Heart right ventricle (tissue), 16 donors: ENCODE measurements at regions of chr2 and their contacts with region 1.

Region 1: GRCh38 chr2:29130295-29130694 is 15.1 kb downstream of the CLIP4 start:
- DNase-seq: no peak
- ATAC-seq: peak in 6 of 8 donors; percentile 42 to 77 (median 58)
- H3K4me3 ChIP-seq: no peak overlapping the region
- H3K27ac ChIP-seq: peak overlapping the region in 5 of 10 donors; percentile 2 to 66 (median 25)
- H3K4me1 ChIP-seq: peaks cover 0 to 28% (median 15%) of the 10 kb centered on the region in 9 donors
- H3K27me3 ChIP-seq: no peaks in the 10 kb centered on the region
- CTCF ChIP-seq: no peak

Region 2: DNA sequence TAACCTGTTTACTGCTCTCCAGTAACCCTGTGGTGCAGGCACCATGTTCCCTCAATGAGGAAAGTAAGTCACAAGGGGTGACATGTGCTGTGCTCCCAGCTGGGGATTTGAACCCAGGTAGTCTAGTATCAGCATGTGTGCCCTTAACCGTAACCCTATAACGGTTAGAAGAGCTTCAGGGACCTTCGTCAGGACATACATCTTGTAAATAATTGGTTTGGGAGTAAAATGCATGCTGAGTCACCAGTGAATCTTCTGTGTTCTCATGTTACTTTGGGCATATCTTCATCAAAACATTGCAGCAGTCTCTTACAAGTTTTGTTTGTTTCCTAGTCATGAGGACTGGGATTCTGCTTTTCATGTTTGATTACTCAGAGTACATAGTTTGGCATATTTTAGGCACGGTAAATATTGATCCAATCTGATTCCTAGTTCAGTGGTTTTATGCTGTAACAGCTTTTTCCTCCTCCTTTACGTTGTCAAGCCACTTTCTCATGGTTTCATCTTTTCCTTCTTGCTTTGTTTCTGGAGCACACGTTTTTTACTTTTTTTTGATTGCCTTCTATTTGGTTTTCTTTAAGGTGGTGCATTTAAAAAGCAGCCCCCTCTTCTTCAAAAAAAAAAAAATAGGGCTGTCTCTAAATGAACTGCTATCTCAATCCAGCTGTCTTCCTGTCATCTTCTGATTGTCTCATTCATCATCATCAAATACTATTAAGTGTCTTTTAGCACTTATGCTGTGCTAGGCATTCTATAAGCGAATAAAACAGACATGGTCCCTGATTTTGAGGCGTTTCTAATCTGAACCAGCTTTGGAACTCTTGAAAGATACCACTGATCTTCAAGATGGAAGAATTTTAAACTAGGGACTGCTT is 35.3 kb after region 1 on chr2:
- intact Hi-C with region 1: loop called in 1 of 10 experiments (anchors 5 kb)
- DNase-seq: no peak
- ATAC-seq: no peak
- H3K4me3 ChIP-seq: no peak overlapping the region
- H3K27ac ChIP-seq: no peak overlapping the region
- H3K4me1 ChIP-seq: no peaks in the 10 kb centered on the region
- H3K27me3 ChIP-seq: no peaks in the 10 kb centered on the region
- CTCF ChIP-seq: no peak

Region 3: DNA sequence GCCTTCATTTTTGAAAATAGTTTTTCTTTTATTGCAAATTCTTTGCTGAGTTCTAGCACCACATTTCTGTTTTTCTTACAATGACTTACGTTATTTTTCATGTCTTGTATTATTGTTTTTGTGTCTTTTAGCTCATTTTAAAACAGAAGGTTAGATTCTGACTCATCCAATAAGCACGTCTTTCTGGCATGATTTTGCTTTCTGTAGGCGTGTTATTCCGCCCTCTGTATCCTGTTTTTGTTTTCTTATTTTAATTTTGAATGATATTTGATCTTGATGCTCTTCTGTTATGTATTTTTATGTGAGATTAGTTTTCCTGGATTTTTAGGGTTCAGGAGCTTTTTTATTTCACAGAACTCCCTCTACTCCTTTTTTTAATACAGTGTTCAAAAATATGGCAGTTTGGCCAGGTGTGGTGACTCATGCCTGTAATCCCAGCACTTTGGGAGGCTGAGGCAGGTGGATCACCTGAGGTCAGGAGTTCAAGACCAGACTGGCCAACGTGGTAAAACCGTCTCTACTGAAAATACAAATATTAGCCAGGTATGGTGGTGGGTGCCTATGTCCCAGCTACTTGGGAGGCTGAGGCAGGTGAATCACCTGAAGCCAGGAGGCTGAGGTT is 130.0 kb after region 1 on chr2:
- intact Hi-C with region 1: no loop called
- DNase-seq: no peak
- ATAC-seq: no peak
- H3K4me3 ChIP-seq: no peak overlapping the region
- H3K27ac ChIP-seq: no peak overlapping the region
- H3K4me1 ChIP-seq: peaks cover 0 to 4% (median 0%) of the 10 kb centered on the region in 9 donors
- H3K27me3 ChIP-seq: peaks cover 0 to 22% (median 4%) of the 10 kb centered on the region in 7 donors
- CTCF ChIP-seq: no peak